ENCODE measurements at regions of chr9 and their contacts with region 1.

Region 1: DNA sequence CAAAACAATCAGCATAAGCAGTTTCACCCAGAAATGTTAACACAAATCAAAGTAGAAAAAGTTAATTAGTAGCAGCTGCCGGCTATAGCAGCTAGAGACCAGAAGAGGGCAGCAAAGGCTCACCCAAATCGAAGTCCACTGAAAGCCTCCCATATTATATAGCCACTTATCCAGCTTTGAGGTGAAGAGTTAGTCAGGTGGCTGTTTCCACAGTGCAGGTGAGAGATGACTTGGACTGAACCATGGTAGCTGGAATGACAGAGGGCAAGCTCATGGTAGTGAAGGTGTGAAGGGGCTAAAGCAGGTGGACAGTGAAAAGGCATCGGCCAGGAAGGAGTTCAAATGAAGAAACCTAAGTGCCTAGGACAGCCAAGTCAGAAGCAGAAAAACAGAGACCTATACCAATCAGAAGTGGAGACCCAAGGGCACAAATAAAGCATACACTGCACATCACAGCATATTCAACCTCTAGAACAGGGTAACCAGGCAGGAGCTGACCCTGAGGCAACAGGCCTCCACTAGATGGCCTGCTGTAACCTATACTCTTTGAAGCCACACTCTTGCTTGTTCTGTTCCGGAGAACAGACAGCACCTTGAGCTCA is 7.2 kb upstream of the RNF38 start:
- DNase-seq: peak; percentile 83
- ATAC-seq: peak; percentile 86
- H3K4me3 ChIP-seq: no peak overlapping the region
- H3K4me3 Mint-ChIP-seq: no peak overlapping the region
- H3K27ac ChIP-seq: peak overlapping the region in 1 of 2 donors; percentile 35
- H3K27ac Mint-ChIP-seq: peak overlapping the region; percentile 54
- H3K4me1 ChIP-seq: no peaks in the 10 kb centered on the region
- H3K4me1 Mint-ChIP-seq: peaks cover 9% of the 10 kb centered on the region
- H3K27me3 ChIP-seq: no peaks in the 10 kb centered on the region
- H3K27me3 Mint-ChIP-seq: no peaks in the 10 kb centered on the region
- CTCF ChIP-seq: peak; percentile 97

Region 2: GRCh38 chr9:36392489-36392888 is 14.7 kb before region 1 on chr9:
- CTCF ChIA-PET with region 1: interaction called, 24 read pairs
- POLR2A ChIA-PET with region 1: no interaction called
- intact Hi-C with region 1: no loop called
- DNase-seq: no peak
- ATAC-seq: no peak
- H3K4me3 ChIP-seq: no peak overlapping the region
- H3K4me3 Mint-ChIP-seq: no peak overlapping the region
- H3K27ac ChIP-seq: no peak overlapping the region
- H3K27ac Mint-ChIP-seq: no peak overlapping the region
- H3K4me1 ChIP-seq: peaks cover 0 to 3% of the 10 kb centered on the region in 2 donors
- H3K4me1 Mint-ChIP-seq: peaks cover 61% of the 10 kb centered on the region
- H3K27me3 ChIP-seq: no peaks in the 10 kb centered on the region
- H3K27me3 Mint-ChIP-seq: no peaks in the 10 kb centered on the region
- CTCF ChIP-seq: no peak

Region 3: GRCh38 chr9:36436909-36437308 is 29.7 kb after region 1 on chr9:
- CTCF ChIA-PET with region 1: interaction called, 22 read pairs
- POLR2A ChIA-PET with region 1: no interaction called
- intact Hi-C with region 1: no loop called
- DNase-seq: no peak
- ATAC-seq: no peak
- H3K4me3 ChIP-seq: no peak overlapping the region
- H3K4me3 Mint-ChIP-seq: no peak overlapping the region
- H3K27ac ChIP-seq: no peak overlapping the region
- H3K27ac Mint-ChIP-seq: no peak overlapping the region
- H3K4me1 ChIP-seq: no peaks in the 10 kb centered on the region
- H3K4me1 Mint-ChIP-seq: peaks cover 10% of the 10 kb centered on the region
- H3K27me3 ChIP-seq: no peaks in the 10 kb centered on the region
- H3K27me3 Mint-ChIP-seq: no peaks in the 10 kb centered on the region
- CTCF ChIP-seq: no peak

Region 4: GRCh38 chr9:36457836-36458429 is 50.7 kb after region 1 on chr9:
- CTCF ChIA-PET with region 1: interaction called, 15 read pairs
- POLR2A ChIA-PET with region 1: no interaction called
- intact Hi-C with region 1: no loop called
- DNase-seq: no peak
- ATAC-seq: peak; percentile 14
- H3K4me3 ChIP-seq: peak overlapping the region in 3 of 5 experiments; percentile 18 to 24 (median 20)
- H3K4me3 Mint-ChIP-seq: peak overlapping the region; percentile 83
- H3K27ac ChIP-seq: peak overlapping the region in 1 of 2 donors; percentile 25
- H3K27ac Mint-ChIP-seq: peak overlapping the region; percentile 79
- H3K4me1 ChIP-seq: peaks cover 16 to 18% of the 10 kb centered on the region in 2 donors
- H3K4me1 Mint-ChIP-seq: peaks cover 38% of the 10 kb centered on the region
- H3K27me3 ChIP-seq: no peaks in the 10 kb centered on the region
- H3K27me3 Mint-ChIP-seq: no peaks in the 10 kb centered on the region
- CTCF ChIP-seq: no peak

Region 5: GRCh38 chr9:36487482-36488388 is 80.5 kb after region 1 on chr9:
- CTCF ChIA-PET with region 1: interaction called, 45 read pairs
- POLR2A ChIA-PET with region 1: no interaction called
- intact Hi-C with region 1: loop called (anchors 2 kb)
- DNase-seq: peak; percentile 93
- ATAC-seq: peak; percentile 90
- H3K4me3 ChIP-seq: peak overlapping the region; percentile 46 to 96 (median 61)
- H3K4me3 Mint-ChIP-seq: peak overlapping the region; percentile 96
- H3K27ac ChIP-seq: peak overlapping the region; percentile 94 to 97
- H3K27ac Mint-ChIP-seq: peak overlapping the region; percentile 99
- H3K4me1 ChIP-seq: peaks cover 26 to 30% of the 10 kb centered on the region in 2 donors
- H3K4me1 Mint-ChIP-seq: peaks cover 51% of the 10 kb centered on the region
- H3K27me3 ChIP-seq: no peaks in the 10 kb centered on the region
- H3K27me3 Mint-ChIP-seq: no peaks in the 10 kb centered on the region
- CTCF ChIP-seq: no peak

Region 6: GRCh38 chr9:36551129-36551528 is 143.9 kb after region 1 on chr9:
- CTCF ChIA-PET with region 1: interaction called, 456 read pairs
- POLR2A ChIA-PET with region 1: no interaction called
- intact Hi-C with region 1: loop called (anchors 1 kb)
- DNase-seq: no peak
- ATAC-seq: no peak
- H3K4me3 ChIP-seq: no peak overlapping the region
- H3K4me3 Mint-ChIP-seq: no peak overlapping the region
- H3K27ac ChIP-seq: no peak overlapping the region
- H3K27ac Mint-ChIP-seq: no peak overlapping the region
- H3K4me1 ChIP-seq: no peaks in the 10 kb centered on the region
- H3K4me1 Mint-ChIP-seq: no peaks in the 10 kb centered on the region
- H3K27me3 ChIP-seq: no peaks in the 10 kb centered on the region
- H3K27me3 Mint-ChIP-seq: peaks cover 14% of the 10 kb centered on the region
- CTCF ChIP-seq: no peak

Region 7: DNA sequence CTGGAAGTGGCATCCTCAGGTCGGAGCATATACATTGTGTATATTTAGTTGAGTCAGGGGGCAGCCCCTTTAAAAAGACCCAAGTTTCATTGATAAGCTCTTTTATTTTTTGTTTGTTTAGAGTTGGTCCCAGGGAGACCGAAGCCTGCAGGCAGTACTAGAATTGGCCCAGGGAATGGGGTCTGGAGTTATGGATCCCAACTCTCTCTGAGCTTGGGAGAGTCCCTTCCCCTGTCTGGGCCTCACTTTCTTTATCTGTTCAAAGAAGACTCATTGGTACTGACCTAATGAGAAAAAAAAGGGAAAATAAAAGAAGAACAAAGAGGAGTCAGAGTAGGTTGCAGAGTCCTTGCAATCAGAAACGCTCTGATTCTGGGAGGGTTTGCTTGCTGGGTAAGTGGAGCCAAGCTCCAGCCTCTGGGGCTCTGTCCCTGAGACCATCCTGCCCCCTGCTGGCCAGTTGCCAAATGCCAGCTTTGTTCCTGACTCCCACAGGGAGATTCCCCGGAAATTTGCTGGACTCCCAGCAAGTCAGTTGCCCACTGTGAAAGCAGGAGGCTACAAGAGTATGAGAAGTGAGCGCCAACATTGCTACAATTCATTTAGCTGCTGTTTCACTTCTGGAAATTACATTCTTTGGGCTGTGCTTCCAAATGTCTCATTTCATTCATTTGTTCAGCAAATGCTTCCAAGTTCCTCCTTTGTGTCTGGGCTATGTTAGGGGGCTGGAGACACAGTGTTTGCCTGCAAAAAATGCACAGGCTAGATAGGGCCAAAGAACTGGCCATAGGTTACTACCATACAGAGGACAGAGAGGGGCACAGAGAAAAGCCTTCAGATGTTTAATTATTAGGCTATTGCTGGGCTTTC is 321.7 kb after region 1 on chr9:
- CTCF ChIA-PET with region 1: interaction called, 71 read pairs
- POLR2A ChIA-PET with region 1: no interaction called
- intact Hi-C with region 1: loop called (anchors 1 kb)
- DNase-seq: peak; percentile 68
- ATAC-seq: peak; percentile 78
- H3K4me3 ChIP-seq: no peak overlapping the region
- H3K4me3 Mint-ChIP-seq: no peak overlapping the region
- H3K27ac ChIP-seq: no peak overlapping the region
- H3K27ac Mint-ChIP-seq: no peak overlapping the region
- H3K4me1 ChIP-seq: peaks cover 9 to 10% of the 10 kb centered on the region in 2 donors
- H3K4me1 Mint-ChIP-seq: peaks cover 10% of the 10 kb centered on the region
- H3K27me3 ChIP-seq: no peaks in the 10 kb centered on the region
- H3K27me3 Mint-ChIP-seq: no peaks in the 10 kb centered on the region
- CTCF ChIP-seq: peak; percentile 91

Measured in B cell (primary cell).